ENCODE measurements at regions of chr19 and their contacts with region 1.

Region 1: DNA sequence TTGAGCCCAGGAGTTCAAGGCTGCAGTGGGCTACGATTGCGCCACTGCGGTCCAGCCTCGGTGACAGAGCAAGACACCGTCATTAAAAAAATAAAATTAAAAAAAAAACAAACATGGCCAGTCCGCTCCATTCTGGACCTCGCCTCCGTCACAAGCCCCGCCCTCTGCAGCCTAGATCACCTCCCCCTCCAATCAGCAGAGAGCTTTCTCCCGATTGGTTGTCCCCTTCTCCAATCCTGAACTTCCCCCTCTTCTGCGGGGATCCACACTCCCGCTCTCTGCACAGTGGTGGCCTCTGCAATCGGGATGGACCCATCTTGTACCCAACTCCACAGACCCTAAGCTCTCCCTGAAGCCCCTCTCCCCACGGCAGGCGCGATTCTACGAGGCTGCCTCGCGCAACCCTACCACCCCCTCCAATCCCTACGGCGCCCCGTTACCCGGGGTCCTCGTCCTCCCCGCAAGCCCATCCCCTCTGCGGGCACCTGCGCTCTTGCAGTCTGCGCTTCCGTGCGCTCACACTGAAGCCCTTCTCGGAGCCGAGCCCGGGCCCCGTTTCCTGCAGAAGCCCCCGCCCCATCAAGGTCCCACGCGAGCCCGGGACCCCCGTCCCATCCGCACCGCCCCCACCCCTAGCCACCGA is 540 bp downstream of the TMEM160 start:
- DNase-seq: peak; percentile 86
- H3K4me3 Mint-ChIP-seq: peak overlapping the region; percentile 88
- H3K27ac Mint-ChIP-seq: peak overlapping the region; percentile 91
- H3K4me1 Mint-ChIP-seq: peaks cover 24% of the 10 kb centered on the region
- H3K27me3 Mint-ChIP-seq: no peaks in the 10 kb centered on the region

Region 2: DNA sequence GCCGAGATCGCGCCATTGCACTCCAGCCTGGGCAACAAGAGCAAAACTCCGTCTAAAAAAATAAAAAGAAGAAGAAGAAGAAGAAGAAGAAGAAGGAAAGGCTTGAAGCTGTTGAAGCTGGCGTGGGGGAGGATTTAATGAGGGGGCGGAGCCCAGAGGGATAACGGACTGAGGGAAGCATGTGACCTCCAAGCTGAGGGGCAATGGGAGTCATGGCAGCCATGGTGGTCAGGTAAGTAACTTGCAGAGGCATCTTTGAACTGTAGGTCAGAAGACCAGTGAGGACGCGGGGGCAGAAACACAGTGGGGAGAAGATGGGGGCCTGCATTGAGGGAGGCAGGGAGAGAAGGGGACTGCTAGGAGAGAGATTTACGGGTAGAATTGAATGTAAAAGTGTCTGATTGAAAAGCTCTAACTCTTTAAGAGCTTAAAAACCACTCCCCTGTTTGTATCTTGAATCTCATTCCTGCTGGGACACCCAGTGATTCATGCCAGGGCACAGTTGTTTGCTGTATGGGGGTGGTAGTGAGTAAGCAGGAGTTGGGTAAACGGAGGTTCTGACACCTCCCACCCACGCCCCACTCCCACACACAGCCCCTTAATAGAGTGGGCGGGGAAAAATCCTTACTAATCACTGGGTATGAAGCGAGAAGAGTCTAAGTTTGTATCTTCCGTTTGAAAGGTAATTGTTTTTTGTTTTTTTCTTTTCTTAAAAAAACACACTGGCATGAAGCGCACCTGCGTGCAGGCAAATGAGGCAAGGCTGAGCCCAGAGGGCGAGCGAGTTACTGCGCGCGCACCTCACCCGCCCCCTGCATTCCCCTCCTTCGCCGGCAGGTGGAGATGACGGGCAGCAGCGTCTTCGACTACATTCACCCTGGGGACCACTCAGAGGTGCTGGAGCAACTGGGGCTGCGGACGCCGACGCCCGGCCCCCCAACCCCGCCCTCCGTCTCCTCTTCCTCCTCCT is 12.5 kb before region 1 on chr19:
- CTCF ChIA-PET with region 1: interaction called, 17 read pairs
- POLR2A ChIA-PET with region 1: no interaction called
- DNase-seq: peak; percentile 93
- H3K4me3 Mint-ChIP-seq: peak overlapping the region; percentile 79
- H3K27ac Mint-ChIP-seq: peak overlapping the region; percentile 74
- H3K4me1 Mint-ChIP-seq: peaks cover 19% of the 10 kb centered on the region
- H3K27me3 Mint-ChIP-seq: peaks cover 20% of the 10 kb centered on the region